ENCODE measurements at regions of chr22 and their contacts with region 1.

Region 1: GRCh38 chr22:22753526-22754267 is 109.3 kb downstream of the GGTLC2 start:
- DNase-seq: peak; percentile 87
- H3K4me3 Mint-ChIP-seq: no peak overlapping the region
- H3K27ac Mint-ChIP-seq: no peak overlapping the region
- H3K4me1 Mint-ChIP-seq: peaks cover 7% of the 10 kb centered on the region
- H3K27me3 Mint-ChIP-seq: peaks cover 19% of the 10 kb centered on the region

Region 2: DNA sequence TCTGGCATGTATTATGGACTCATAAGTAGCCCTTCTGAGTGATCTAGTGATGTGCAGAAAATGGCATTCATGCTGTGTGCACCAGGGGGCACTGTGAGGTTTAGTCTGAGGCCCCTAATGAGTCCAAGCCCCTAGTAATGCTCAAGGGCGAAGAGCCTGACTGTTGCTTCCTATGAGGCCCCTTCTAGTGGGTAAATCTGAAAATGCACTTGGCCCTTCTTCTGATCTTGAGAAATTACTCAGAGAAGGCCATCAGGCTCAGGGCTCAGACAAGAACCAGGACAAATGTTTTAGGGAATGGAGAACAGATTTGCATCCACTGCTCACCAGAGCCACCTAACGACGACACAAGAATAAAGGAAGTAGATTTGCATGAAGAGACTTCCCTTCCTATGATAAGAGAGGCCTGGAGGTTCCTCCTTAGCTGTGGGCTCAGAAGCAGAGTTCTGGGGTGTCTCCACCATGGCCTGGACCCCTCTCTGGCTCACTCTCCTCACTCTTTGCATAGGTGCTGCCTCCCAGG is 33.4 kb before region 1 on chr22:
- CTCF ChIA-PET with region 1: interaction called, 12 read pairs
- DNase-seq: peak; percentile 53
- H3K4me3 Mint-ChIP-seq: no peak overlapping the region
- H3K27ac Mint-ChIP-seq: peak overlapping the region; percentile 39
- H3K4me1 Mint-ChIP-seq: peaks cover 5% of the 10 kb centered on the region
- H3K27me3 Mint-ChIP-seq: peaks cover 13% of the 10 kb centered on the region

Region 3: DNA sequence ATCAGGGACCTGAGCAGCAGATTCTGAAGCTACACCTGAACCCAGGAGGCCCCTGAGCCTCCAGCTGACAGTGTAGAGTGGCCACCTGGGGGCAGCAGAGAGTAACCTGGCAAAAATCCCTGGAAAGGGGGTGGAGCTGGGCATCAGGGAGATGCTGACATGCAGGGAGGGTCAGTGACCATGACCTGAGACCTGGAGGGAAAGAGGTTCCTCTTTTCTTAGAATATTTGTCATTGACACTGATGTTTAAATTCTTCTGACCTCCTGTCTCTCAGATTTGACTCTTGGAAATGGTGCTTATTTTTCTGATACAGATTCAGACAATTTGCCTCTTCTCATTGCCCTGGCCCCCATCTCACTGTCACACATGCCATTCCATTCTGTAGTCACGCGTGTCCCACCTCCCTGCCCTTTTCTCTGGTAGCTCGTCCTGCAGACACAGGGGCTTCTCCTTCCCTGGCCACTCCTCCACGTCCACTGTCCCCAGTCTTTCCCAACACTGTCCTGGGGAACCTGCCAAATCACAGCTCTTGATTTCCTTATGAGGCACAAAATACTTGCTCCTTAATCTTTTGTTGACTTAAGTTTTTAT is 16.7 kb after region 1 on chr22:
- CTCF ChIA-PET with region 1: interaction called, 28 read pairs
- DNase-seq: peak; percentile 64
- H3K4me3 Mint-ChIP-seq: no peak overlapping the region
- H3K27ac Mint-ChIP-seq: no peak overlapping the region
- H3K4me1 Mint-ChIP-seq: no peaks in the 10 kb centered on the region
- H3K27me3 Mint-ChIP-seq: peaks cover 61% of the 10 kb centered on the region

Measured in activated naive CD4-positive, alpha-beta T cell treated with anti-CD3 and anti-CD28 coated beads, Interleukin-2, amount 10 ng/mL, durations not matched to agents 7 days and 5 days (primary cell).